ENCODE measurements at regions of chr9 and their contacts with region 1.

Region 1: DNA sequence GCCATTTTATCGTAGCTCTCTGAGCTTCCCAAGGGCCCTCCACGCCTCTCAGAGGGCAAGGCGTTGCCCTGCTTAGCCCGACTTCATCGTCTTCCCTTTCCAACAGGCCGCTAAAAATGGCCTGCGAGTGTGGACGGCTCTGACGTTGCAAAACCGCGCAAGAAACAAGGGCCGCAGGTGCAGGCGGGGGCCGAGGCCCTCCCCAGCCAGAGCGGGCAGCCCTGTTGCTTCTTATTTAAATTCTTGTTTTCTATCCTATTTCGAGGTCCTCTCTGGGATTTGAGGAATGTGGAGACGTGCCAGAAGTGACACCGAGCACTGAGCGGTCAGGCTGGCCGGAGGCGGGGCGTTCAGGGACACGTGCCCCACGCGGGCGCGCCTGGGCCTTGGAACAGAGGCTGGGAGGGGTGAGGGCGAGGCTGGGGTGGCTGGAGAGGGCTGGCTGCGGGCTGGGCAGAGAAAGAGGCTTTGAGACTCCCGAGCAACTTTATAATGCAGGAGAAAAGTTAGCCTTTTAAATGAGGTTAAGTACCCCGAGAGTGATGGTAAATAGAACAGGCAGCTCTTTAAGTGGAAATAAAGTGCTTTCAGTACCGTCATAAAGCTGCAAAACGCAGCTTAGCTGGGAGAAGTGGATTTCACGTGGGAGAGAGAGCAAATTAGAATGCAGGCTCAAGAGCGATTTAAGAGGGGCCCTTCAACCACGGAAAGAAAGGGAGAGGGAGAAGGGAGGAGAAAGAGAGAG is 243.6 kb downstream of the AUH start:
- DNase-seq: peak; percentile 81 to 93 (median 89)
- ATAC-seq: peak; percentile 83 to 99 (median 98)
- H3K4me3 ChIP-seq: peak overlapping the region in 11 of 12 donors; percentile 9 to 53 (median 43)
- H3K27ac ChIP-seq: peak overlapping the region in 11 of 12 donors; percentile 22 to 85 (median 70)
- H3K4me1 ChIP-seq: peaks cover 0 to 40% (median 21%) of the 10 kb centered on the region in 12 donors
- H3K27me3 ChIP-seq: no peaks in the 10 kb centered on the region
- CTCF ChIP-seq: no peak
- POLR2A ChIP-seq: peak in 1 of 2 donors; percentile 5

Region 2: GRCh38 chr9:90147426-90147825 is 970.7 kb before region 1 on chr9:
- intact Hi-C with region 1: no loop called
- DNase-seq: no peak
- ATAC-seq: no peak
- H3K4me3 ChIP-seq: no peak overlapping the region
- H3K27ac ChIP-seq: no peak overlapping the region
- H3K4me1 ChIP-seq: no peaks in the 10 kb centered on the region
- H3K27me3 ChIP-seq: peaks cover 0 to 5% (median 0%) of the 10 kb centered on the region in 9 donors
- CTCF ChIP-seq: no peak
- POLR2A ChIP-seq: no peak

Region 3: DNA sequence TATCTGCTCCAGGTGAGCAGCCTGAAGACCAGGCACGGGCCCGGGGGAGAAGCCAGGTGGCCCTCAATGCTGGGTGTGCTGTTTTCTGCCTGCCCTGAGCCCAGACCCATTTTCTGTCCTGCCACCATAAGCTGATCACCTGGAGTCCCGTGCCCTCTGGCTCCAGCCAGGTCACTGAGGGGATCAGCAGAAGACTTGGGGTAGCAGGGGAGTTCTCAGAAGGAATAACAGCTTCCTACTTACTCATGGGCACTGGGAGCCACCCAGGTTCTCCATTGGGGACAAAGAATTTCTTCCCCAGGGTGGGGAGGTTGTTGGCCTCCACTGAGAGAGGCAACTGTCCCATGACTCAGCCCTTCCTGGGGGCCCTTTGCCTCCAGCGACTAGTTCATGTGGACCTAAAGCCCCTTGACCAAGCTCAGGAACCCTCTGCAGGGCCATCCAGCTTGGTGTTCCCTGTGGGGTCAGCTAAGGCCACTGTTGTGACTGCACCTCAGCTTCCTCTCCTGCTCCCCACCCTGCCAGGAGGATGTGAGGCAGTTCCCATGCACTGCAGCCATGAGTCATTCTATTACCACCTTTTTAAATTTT is 68.5 kb after region 1 on chr9:
- intact Hi-C with region 1: loop called in 4 of 10 experiments (anchors 5 to 10 kb)
- DNase-seq: peak in 2 of 5 donors; percentile 49 to 58
- ATAC-seq: peak in 3 of 4 donors; percentile 66 to 91 (median 68)
- H3K4me3 ChIP-seq: no peak overlapping the region
- H3K27ac ChIP-seq: peak overlapping the region in 6 of 12 donors; percentile 36 to 67 (median 55)
- H3K4me1 ChIP-seq: peaks cover 3 to 24% (median 13%) of the 10 kb centered on the region in 12 donors
- H3K27me3 ChIP-seq: no peaks in the 10 kb centered on the region
- CTCF ChIP-seq: no peak
- POLR2A ChIP-seq: no peak